Calu3 (cell line): ENCODE measurements at regions of chr17 and their contacts with region 1.

Region 1: GRCh38 chr17:45584092-45585036 is 93.8 kb upstream of the PLEKHM1 start:
- DNase-seq: peak; percentile 82
- H3K4me3 Mint-ChIP-seq: peak overlapping the region; percentile 81
- H3K27ac Mint-ChIP-seq: peak overlapping the region; percentile 78
- H3K4me1 Mint-ChIP-seq: peaks cover 18% of the 10 kb centered on the region
- H3K27me3 Mint-ChIP-seq: no peaks in the 10 kb centered on the region
- CTCF ChIP-seq: no peak

Region 2: GRCh38 chr17:45628019-45628418 is 43.7 kb after region 1 on chr17:
- CTCF ChIA-PET with region 1: no interaction called
- intact Hi-C with region 1: no loop called
- DNase-seq: no peak
- H3K4me3 Mint-ChIP-seq: no peak overlapping the region
- H3K27ac Mint-ChIP-seq: no peak overlapping the region
- H3K4me1 Mint-ChIP-seq: no peaks in the 10 kb centered on the region
- H3K27me3 Mint-ChIP-seq: no peaks in the 10 kb centered on the region
- CTCF ChIP-seq: no peak

Region 3: GRCh38 chr17:46266656-46267544 is 682.5 kb after region 1 on chr17:
- CTCF ChIA-PET with region 1: no interaction called
- intact Hi-C with region 1: loop called (anchors 5 kb)
- DNase-seq: peak; percentile 91
- H3K4me3 Mint-ChIP-seq: peak overlapping the region; percentile 71
- H3K27ac Mint-ChIP-seq: peak overlapping the region; percentile 41
- H3K4me1 Mint-ChIP-seq: peaks cover 42% of the 10 kb centered on the region
- H3K27me3 Mint-ChIP-seq: peaks cover 32% of the 10 kb centered on the region
- CTCF ChIP-seq: no peak